Uterus (tissue), 4 donors: ENCODE measurements at regions of chr19 and their contacts with region 1.

Region 1: DNA sequence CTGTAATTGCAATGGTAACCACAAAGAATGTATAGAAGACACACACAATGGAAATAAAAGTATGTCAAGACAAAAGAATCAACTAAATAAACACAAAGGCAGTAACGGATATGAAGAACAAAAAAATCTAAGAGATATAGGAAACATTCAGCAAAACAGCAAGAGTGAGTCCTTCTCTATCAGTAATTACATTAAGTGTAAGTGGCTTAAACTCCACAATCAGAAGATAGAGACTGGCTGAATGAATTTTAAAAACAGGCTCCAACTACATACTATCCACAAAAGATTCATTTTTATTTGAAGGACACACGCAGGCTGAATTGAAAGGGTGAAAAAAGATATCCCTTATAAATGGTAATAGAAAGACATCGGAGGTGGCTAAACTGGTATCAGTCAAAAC is 19.5 kb downstream of the ZNF616 start:
- DNase-seq: no peak
- H3K4me3 ChIP-seq: no peak overlapping the region
- H3K27ac ChIP-seq: no peak overlapping the region
- H3K4me1 ChIP-seq: no peaks in the 10 kb centered on the region
- H3K27me3 ChIP-seq: no peaks in the 10 kb centered on the region
- CTCF ChIP-seq: no peak
- POLR2A ChIP-seq: no peak

Region 2: GRCh38 chr19:52065399-52065798 is 54.9 kb before region 1 on chr19:
- intact Hi-C with region 1: loop called (anchors 5 kb)
- DNase-seq: no peak
- H3K4me3 ChIP-seq: no peak overlapping the region
- H3K27ac ChIP-seq: no peak overlapping the region
- H3K4me1 ChIP-seq: no peaks in the 10 kb centered on the region
- H3K27me3 ChIP-seq: no peaks in the 10 kb centered on the region
- CTCF ChIP-seq: no peak
- POLR2A ChIP-seq: no peak

Region 3: GRCh38 chr19:52285466-52285865 is 165.2 kb after region 1 on chr19:
- intact Hi-C with region 1: no loop called
- DNase-seq: no peak
- H3K4me3 ChIP-seq: no peak overlapping the region
- H3K27ac ChIP-seq: no peak overlapping the region
- H3K4me1 ChIP-seq: no peaks in the 10 kb centered on the region
- H3K27me3 ChIP-seq: no peaks in the 10 kb centered on the region
- CTCF ChIP-seq: no peak
- POLR2A ChIP-seq: no peak